ENCODE measurements at regions of chr11 and their contacts with region 1.

Region 1: DNA sequence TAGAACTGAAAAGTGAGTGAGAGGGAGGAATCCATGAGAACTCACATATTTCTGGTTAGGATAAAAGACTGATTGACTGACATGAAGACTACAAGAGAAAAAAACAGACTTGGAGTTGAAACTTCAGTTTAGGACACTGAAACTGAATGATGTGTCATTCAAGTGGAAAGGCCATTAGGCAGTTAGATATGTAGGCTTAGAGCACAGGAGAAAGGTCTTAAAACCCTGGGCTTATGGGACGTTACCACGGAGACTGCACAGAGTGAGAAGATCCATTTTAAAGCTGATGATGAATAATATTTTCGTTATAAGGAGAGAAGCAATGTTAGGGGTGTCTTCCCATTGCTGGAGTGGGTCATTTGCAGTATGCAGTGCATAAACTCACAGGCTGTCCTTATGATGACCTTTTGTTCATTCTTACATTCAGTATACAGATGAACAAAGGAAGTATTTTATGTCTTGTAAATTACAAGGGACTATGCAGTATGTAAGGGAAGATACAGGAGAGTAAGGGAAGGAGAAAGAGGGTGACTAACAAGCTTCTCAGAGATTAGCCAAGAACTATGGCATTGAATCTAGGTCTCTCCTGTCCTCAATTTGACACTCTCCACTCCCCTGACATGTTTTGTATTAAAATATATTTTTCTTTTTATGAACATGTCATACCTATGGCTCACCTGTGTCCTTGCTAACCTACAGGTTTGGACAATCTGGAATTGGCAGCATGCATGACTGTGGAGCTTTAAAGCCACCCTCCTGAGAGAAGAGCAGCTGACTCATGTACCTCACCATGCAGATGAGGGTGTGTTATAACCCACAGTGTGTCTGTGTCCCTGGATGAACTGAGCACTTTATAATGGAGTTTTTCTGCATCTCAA is 63.7 kb downstream of the MAML2 start:
- DNase-seq: peak; percentile 32
- H3K4me3 ChIP-seq: no peak overlapping the region
- H3K27ac ChIP-seq: peak overlapping the region; percentile 50
- H3K4me1 ChIP-seq: peaks cover 32% of the 10 kb centered on the region
- H3K27me3 ChIP-seq: no peaks in the 10 kb centered on the region
- CTCF ChIP-seq: no peak

Region 2: DNA sequence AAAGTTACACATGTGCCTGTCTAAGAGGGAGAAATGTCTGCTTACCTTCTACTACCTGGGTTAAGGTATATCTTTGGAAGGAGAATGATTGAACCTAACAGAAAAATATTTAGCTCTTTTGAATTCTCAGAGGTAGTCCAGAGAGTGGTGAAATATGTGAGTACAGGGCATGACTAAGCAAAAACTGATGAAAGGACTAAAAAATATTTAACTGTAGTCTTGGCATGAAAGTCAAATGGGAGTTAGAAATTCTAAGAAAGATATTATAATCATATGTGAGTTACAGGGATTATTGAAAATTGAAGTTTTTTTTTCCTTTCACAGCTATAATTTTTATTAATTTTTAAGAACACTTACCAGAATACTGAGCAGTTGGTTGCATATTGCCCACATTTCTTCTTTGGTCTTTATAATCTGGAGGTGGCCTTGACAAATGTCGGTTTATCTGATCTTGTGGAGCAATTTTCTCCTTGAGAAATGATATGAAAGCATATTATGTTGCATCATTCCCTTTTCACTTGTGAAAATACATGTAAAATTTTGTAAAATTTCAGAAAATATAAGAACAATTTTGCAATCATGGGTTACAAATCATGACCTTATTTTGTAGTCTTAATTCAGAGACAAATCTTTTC is 294.0 kb before region 1 on chr11:
- dilution Hi-C with region 1: no loop called
- DNase-seq: no peak
- H3K4me3 ChIP-seq: no peak overlapping the region
- H3K27ac ChIP-seq: no peak overlapping the region
- H3K4me1 ChIP-seq: no peaks in the 10 kb centered on the region
- H3K27me3 ChIP-seq: no peaks in the 10 kb centered on the region
- CTCF ChIP-seq: no peak

Region 3: DNA sequence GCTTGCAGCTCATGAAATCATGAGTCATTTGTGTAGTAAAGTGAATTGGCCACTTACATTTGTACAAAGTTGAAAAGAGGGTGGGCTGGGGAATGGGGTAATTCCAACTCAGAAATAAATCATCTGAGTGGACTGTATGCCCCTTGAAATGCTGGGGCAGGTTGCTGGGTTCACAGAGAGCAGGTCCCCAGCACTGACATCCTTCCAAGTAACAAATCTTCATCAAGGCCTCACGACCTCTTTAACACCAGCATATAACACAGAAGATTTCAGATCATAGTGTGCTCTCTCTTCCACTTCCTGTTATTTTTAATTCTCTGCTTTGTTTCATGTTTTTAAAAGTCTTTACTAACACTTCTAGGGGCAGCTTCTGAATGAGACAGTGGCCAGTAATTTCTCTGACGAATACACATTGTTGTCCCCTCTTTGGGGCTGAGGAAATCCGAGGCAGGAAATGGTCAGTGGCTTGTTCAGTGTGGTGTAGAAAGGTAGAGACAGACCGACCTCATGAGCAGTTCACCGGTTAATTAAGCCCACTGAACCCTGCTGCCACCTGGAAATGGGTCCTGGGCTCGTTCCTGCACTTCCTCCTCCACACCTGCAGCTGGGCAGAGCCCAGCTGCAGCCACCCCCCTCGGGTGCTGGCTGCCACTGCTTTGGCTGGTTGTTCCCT is 64.0 kb before region 1 on chr11:
- dilution Hi-C with region 1: loop called (anchors 5 kb)
- DNase-seq: no peak
- H3K4me3 ChIP-seq: no peak overlapping the region
- H3K27ac ChIP-seq: no peak overlapping the region
- H3K4me1 ChIP-seq: peaks cover 7% of the 10 kb centered on the region
- H3K27me3 ChIP-seq: no peaks in the 10 kb centered on the region
- CTCF ChIP-seq: no peak